ENCODE measurements at regions of chr6 and their contacts with region 1.

Region 1: DNA sequence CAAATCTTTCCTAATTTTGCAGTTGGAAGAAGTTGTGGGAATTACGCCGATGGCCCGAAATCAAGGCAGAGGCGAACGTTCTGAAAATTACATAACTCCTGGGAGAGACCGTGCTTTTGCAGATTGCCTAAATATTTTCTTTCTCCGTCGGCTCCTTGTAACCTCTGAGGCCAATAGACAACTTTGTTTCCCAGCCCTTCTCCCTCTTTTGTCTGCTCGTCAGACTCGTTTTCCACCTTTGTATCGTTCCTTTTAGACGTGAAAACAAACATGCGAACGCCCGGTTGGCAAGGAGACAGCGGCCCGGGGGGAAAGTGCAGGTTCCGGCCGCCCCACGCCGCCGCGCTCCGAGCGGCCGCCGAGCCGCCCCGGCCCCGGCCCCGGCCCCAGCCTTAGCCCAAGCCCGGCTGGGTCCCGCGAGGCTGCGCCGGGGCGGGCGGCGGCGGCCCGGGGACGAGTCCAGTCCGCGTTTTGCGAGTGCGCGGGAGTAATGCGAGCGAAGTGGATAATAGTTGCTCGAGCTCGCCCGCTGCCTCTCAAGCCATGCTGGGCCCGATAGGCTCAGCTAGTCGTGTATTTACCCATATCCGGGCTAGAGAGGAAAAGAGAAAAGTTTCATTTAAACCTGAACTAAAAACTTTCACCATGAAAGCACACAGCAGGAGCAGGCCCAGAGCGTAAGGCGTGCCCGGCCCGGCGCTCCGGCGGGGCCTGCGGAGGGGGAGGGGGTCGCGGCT is at the start of gene ARID1B:
- DNase-seq: peak; percentile 72 to 90 (median 82)
- ATAC-seq: peak; percentile 51 to 72 (median 66)
- H3K4me3 ChIP-seq: peak within 1 kb of the TSS; percentile 46 to 85 (median 74)
- H3K27ac ChIP-seq: peak within 1 kb of the TSS; percentile 94 to 99 (median 98)
- H3K4me1 ChIP-seq: peaks cover 7 to 22% (median 10%) of the 10 kb centered on the region in 3 donors
- H3K27me3 ChIP-seq: no peaks in the 10 kb centered on the region
- CTCF ChIP-seq: no peak
- total RNA-seq, gene ARID1B: 32.1 to 68.0 (median 43.7) TPM

Region 2: DNA sequence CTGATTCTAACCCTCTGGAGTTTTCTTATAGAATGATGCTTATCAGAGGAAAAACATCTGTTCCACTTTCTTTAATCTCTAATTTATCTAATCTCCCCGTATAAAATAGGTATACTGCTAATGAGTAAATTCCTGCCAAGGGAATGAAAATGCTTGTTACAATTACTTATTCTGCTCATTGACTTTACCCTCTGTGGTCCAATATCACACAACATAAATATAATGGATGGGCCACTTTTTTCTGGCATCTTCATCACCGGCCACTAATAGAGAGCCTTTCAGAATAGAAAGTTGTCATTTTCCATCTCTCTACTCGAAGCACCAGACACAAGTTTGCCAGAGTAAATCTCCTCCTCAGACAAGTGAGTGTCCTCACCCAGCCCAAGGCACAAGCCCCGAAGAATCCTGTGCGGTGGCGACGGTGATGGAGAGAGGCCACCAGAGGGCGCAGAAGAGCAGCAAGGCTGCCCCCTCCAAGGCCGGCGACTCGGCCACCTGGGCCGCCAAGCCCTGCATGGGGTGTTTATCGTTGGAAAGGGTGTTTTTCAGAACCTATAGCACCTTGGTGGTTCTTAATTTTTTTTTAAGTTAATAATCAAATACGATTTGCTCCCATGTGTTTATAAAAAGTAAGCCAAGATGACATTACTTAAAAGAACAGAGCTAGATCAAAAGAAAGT is 212.7 kb before region 1 on chr6:
- intact Hi-C with region 1: loop called in 1 of 3 experiments (anchors 10 kb)
- DNase-seq: peak; percentile 63 to 96 (median 81)
- ATAC-seq: peak; percentile 98 to 100 (median 99)
- H3K4me3 ChIP-seq: no peak overlapping the region
- H3K27ac ChIP-seq: no peak overlapping the region
- H3K4me1 ChIP-seq: no peaks in the 10 kb centered on the region
- H3K27me3 ChIP-seq: no peaks in the 10 kb centered on the region
- CTCF ChIP-seq: peak; percentile 81 to 89 (median 87)

Region 3: DNA sequence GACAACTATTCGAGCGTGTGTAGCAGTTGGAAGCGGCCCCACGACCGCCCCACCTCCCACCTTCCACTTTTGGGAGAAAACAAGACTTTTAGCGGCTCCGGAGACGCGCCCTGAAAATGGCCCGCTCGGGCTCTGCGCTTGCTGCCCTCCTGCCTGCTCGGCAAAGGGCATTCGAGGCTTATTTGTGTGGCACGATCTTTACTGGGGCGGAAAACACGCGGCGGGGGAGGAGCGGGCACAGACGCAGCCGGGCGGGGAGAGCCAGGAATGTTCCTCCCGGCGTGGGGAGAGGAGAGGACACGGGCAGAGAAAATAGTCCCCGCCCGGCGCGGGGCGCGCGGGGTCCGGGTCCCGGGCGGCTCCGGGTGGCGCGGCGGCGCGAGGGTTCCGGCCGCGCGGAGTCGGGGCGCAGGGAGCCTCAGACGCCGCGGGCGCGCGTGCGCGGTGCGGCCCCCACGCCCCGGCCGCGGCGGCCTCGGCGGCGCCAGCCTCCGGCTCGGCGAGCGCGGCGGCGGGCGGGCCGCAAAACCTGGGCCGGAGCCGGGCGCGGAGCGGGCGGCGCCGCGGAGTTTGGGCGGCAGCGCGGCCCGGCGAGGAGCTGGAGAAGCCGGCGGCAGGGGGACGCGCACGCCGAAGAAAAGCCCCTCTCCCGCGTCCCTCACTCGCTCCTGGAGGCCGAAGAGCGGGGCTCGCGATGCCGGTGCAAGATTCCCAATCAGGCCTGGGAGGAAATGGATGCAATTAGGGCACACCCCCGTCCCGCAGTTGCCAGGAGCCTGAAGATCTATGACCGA is 89.8 kb before region 1 on chr6:
- intact Hi-C with region 1: loop called in 1 of 3 experiments (anchors 10 kb)
- DNase-seq: peak; percentile 90 to 95 (median 93)
- ATAC-seq: peak; percentile 84 to 91 (median 91)
- H3K4me3 ChIP-seq: peak overlapping the region; percentile 45 to 66 (median 55)
- H3K27ac ChIP-seq: peak overlapping the region; percentile 93 to 99 (median 98)
- H3K4me1 ChIP-seq: peaks cover 0 to 14% (median 8%) of the 10 kb centered on the region in 3 donors
- H3K27me3 ChIP-seq: no peaks in the 10 kb centered on the region
- CTCF ChIP-seq: no peak

Region 4: DNA sequence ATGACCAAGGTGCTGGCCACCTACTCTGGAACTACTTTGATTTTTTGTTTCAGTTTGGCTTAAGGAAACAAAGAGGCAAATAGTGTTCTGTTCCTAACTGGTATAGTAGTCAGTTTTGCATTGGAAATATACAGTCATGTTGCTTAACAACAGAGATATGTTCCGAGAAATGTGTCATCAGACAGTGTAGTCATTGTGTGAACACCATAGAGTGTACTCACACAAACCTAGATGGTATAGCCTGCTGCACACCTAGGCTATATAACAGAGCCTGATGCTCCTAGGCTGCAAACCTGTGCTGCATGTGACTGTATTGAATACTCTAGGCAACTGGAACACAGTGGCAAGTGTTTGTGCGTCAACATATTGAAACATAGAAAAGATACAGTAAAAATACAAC is 80.6 kb after region 1 on chr6:
- intact Hi-C with region 1: no loop called
- DNase-seq: no peak
- ATAC-seq: peak in 3 of 4 donors; percentile 21 to 24 (median 22)
- H3K4me3 ChIP-seq: no peak overlapping the region
- H3K27ac ChIP-seq: no peak overlapping the region
- H3K4me1 ChIP-seq: peaks cover 0 to 7% (median 0%) of the 10 kb centered on the region in 3 donors
- H3K27me3 ChIP-seq: no peaks in the 10 kb centered on the region
- CTCF ChIP-seq: no peak

Region 5: DNA sequence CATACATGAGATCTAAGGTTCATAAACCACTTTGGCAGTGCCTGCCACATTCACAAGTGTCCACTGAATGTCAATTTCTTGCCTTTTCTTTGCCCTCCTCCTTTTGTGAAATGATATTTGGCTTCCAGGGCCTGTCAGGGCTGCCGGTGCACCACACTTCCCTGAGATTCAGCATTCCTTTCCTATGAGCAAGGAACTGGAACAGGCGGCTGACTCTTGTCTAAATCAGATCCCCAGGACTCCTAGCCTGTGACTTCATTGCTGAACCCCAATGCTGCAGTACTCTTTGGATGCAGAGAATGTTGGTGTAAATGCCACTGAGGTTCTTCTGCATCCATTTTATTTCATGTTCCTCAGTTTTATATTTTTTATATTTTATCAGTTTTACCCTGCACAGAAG is 172.4 kb after region 1 on chr6:
- intact Hi-C with region 1: loop called in 1 of 3 experiments (anchors 10 kb)
- DNase-seq: no peak
- ATAC-seq: peak in 3 of 4 donors; percentile 48 to 77 (median 57)
- H3K4me3 ChIP-seq: no peak overlapping the region
- H3K27ac ChIP-seq: peak overlapping the region in 1 of 4 donors; percentile 13
- H3K4me1 ChIP-seq: peaks cover 7 to 30% (median 21%) of the 10 kb centered on the region in 3 donors
- H3K27me3 ChIP-seq: no peaks in the 10 kb centered on the region
- CTCF ChIP-seq: no peak